ENCODE measurements at regions of chr7 and their contacts with region 1.

Region 1: DNA sequence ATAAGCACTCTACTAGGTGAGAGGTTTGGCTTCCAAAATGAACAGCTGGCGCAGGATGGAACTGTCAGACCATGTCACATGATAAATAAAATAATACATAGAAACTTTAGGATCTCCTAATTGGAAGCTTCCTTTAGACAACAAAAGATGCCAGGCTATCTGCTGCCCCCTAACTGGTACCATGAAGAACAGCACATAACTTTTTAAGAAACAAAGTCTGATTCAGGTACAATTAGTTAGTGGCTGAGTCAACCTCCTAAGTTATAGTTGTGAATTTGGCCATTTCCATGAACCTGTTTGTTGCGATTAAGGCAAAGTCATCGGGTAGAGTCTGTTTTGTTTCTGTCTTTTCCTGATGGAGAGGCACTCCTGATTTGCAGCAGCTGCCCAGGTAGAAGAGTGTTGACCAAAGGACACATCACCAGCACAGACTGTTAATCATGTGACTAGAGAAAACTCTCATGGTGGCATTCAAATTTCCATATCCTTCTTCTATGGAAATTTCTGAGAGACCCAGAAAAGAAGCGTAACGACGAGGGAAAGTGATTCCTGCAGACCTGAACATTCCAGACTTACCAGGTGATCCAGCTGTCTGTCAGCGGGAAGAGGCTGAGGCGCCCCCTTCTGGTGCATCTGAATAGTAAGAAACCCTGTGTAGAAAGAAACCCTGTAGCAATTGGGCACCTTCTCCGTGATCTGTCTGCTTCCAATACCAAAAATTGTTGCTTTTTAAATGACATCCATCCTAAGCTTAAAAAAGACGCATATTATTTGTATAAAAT is 8.6 kb upstream of the INHBA start:
- DNase-seq: peak in 1 of 3 donors; percentile 23
- H3K4me3 ChIP-seq: no peak overlapping the region
- H3K27ac ChIP-seq: no peak overlapping the region
- H3K4me1 ChIP-seq: peaks cover 2 to 22% (median 11%) of the 10 kb centered on the region in 4 experiments
- H3K27me3 ChIP-seq: no peaks in the 10 kb centered on the region

Region 2: GRCh38 chr7:41725013-41725412 is 13.5 kb after region 1 on chr7:
- CTCF ChIA-PET with region 1: interaction called, 12 read pairs
- POLR2A ChIA-PET with region 1: no interaction called
- DNase-seq: no peak
- H3K4me3 ChIP-seq: no peak overlapping the region
- H3K27ac ChIP-seq: no peak overlapping the region
- H3K4me1 ChIP-seq: peaks cover 0 to 20% (median 0%) of the 10 kb centered on the region in 4 experiments
- H3K27me3 ChIP-seq: no peaks in the 10 kb centered on the region